Activated T-helper 1 cell treated with anti-CD3 and anti-CD28 coated beads, Interleukin-12 subunit alpha, Interleukin-12 subunit beta, Interleukin-2, Interleukin-4 antibody, amounts not matched to agents 30 ng/mL and 10 ng/mL and 1 ng/mL, durations not matched to agents 14 hours and 24 hours and 36 hours (primary cell): ENCODE measurements at regions of chr3 and their contacts with region 1.

Region 1: GRCh38 chr3:9932843-9933560 is 632 bp upstream of the CRELD1 start:
- DNase-seq: peak; percentile 78
- H3K4me3 Mint-ChIP-seq: peak overlapping the region; percentile 96
- H3K27ac Mint-ChIP-seq: peak overlapping the region; percentile 95
- H3K4me1 Mint-ChIP-seq: peaks cover 34% of the 10 kb centered on the region
- H3K27me3 Mint-ChIP-seq: no peaks in the 10 kb centered on the region

Region 2: GRCh38 chr3:9721015-9721699 is 211.8 kb before region 1 on chr3:
- intact Hi-C with region 1: no loop called
- DNase-seq: no peak
- H3K4me3 Mint-ChIP-seq: no peak overlapping the region
- H3K27ac Mint-ChIP-seq: no peak overlapping the region
- H3K4me1 Mint-ChIP-seq: no peaks in the 10 kb centered on the region
- H3K27me3 Mint-ChIP-seq: peaks cover 7% of the 10 kb centered on the region

Region 3: GRCh38 chr3:9731206-9732079 is 201.6 kb before region 1 on chr3 and contains the start of gene BRPF1:
- intact Hi-C with region 1: loop called (anchors 1 kb)
- DNase-seq: peak; percentile 96
- H3K4me3 Mint-ChIP-seq: peak within 1 kb of the TSS; percentile 96
- H3K27ac Mint-ChIP-seq: peak within 1 kb of the TSS; percentile 94
- H3K4me1 Mint-ChIP-seq: peaks cover 58% of the 10 kb centered on the region
- H3K27me3 Mint-ChIP-seq: no peaks in the 10 kb centered on the region
- total RNA-seq, gene BRPF1: 44.6 and 45.9 TPM in 2 replicates

Region 4: DNA sequence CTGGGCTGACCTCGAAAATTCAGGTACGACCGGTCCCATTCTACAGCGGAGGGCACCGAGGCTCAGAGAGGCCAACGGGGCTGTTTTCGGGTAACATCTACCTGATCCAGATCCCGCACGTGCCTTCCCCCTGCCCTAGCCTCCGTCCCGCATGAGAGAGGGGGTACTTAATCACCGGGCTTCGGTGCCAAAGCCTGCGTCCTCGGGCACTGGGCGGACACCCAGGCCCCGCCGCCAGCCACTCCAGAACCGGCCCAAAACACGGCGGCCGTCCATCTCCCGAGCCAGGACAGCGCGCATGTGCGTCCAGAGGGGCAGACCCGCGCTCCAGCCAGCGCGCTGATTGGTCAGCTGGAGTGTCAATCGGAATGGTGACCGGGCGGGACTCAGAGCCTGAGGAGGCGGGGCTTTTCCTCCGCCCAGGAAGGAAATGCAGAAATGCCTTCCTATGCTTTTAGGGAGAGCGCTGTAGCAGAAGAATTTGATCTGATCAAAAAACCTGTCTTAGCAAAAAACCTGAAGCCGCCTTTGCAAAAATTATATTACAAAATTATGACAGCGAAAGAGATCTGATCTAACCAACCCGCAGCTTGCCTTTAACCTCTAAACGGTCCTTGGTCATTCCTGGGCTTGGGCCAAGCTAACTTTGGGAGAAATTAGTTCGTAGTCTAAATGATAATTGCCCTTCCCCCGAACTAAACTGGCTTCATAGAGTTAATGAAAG is 89.1 kb before region 1 on chr3 and contains the start of gene RPUSD3:
- intact Hi-C with region 1: loop called (anchors 1 kb)
- DNase-seq: peak; percentile 95
- H3K4me3 Mint-ChIP-seq: peak within 1 kb of the TSS; percentile 98
- H3K27ac Mint-ChIP-seq: peak within 1 kb of the TSS; percentile 91
- H3K4me1 Mint-ChIP-seq: peaks cover 28% of the 10 kb centered on the region
- H3K27me3 Mint-ChIP-seq: no peaks in the 10 kb centered on the region
- total RNA-seq, gene RPUSD3: 79.2 and 79.5 TPM in 2 replicates

Region 5: DNA sequence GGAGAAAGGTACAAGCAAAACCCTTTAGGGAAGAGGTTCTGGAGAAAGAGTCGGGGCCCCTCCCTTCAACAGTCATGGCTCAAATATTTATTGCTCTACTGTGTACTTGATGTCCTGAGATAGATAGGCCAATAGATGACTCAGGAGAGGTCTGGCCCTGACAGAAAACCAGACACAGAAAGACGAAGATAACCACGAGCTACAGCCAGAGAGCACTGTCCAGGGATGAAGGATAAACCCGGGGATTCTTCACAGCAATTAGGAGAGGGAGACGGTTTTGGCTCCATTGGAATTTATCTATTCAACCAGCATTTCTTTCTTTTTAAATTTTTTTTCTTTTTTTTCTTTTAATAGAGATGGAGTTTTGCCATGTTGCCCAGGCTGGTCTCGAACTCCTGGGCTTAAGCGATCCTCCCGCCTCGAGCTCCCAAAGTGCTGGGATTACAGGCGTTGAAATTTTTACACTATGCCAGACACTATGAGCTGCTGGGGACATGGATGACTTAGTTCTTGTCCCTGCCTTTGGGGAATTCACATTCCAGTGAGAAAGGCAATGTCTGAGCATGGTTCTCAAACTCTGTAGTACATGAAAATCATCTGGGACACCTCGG is 48.3 kb before region 1 on chr3:
- intact Hi-C with region 1: no loop called
- DNase-seq: no peak
- H3K4me3 Mint-ChIP-seq: no peak overlapping the region
- H3K27ac Mint-ChIP-seq: no peak overlapping the region
- H3K4me1 Mint-ChIP-seq: peaks cover 2% of the 10 kb centered on the region
- H3K27me3 Mint-ChIP-seq: peaks cover 10% of the 10 kb centered on the region

Region 6: DNA sequence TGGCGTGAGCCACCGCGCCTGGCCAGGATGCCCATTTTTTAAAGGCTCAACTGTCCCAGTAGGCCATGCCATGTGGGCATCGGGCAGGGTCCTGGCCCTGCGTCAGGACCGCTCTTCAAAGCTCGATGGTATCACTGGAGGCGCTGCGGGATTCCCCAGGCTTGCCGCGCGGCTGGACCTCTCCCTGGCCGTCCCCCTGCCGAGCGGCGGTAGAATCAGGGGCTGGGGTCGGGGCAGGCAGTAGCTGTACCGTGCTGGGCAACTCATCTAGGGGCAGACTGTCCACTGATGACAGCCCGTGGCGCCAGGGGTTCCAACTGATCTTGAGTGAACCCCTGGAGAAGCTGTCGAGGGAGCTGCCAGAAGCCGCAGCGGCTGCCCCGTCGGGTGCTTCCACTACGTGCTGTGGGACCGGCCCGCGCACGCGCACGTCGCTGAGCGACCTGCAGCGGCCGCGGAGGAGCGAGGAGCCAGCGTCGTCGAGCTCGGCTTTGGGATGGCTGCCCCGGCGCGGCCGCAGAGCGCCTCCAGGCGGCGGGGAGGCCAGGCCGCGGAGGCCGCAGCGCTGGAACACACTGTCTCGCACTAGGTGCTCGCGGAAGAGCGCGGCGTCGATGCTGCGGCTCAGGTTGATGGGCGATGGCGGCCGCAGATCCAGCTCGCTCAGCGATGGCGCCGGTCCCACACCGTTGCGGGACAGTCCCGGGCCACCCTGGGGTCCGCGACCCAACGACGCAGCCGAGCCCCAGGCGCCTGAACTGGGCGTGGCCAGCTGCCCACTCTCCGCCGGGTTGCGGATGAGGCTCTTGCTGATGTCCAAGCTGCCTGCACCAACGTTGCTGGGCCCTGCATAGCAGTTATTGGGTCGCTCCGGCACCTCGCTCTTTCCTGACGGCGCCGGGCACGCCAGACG is 13.4 kb after region 1 on chr3:
- intact Hi-C with region 1: loop called (anchors 1 kb)
- DNase-seq: peak; percentile 86
- H3K4me3 Mint-ChIP-seq: peak overlapping the region; percentile 89
- H3K27ac Mint-ChIP-seq: peak overlapping the region; percentile 82
- H3K4me1 Mint-ChIP-seq: peaks cover 18% of the 10 kb centered on the region
- H3K27me3 Mint-ChIP-seq: no peaks in the 10 kb centered on the region

Region 7: GRCh38 chr3:10010486-10011465 is 77.8 kb after region 1 on chr3:
- intact Hi-C with region 1: loop called (anchors 1 kb)
- DNase-seq: peak; percentile 85
- H3K4me3 Mint-ChIP-seq: peak overlapping the region; percentile 70
- H3K27ac Mint-ChIP-seq: no peak overlapping the region
- H3K4me1 Mint-ChIP-seq: peaks cover 29% of the 10 kb centered on the region
- H3K27me3 Mint-ChIP-seq: peaks cover 4% of the 10 kb centered on the region

Region 8: DNA sequence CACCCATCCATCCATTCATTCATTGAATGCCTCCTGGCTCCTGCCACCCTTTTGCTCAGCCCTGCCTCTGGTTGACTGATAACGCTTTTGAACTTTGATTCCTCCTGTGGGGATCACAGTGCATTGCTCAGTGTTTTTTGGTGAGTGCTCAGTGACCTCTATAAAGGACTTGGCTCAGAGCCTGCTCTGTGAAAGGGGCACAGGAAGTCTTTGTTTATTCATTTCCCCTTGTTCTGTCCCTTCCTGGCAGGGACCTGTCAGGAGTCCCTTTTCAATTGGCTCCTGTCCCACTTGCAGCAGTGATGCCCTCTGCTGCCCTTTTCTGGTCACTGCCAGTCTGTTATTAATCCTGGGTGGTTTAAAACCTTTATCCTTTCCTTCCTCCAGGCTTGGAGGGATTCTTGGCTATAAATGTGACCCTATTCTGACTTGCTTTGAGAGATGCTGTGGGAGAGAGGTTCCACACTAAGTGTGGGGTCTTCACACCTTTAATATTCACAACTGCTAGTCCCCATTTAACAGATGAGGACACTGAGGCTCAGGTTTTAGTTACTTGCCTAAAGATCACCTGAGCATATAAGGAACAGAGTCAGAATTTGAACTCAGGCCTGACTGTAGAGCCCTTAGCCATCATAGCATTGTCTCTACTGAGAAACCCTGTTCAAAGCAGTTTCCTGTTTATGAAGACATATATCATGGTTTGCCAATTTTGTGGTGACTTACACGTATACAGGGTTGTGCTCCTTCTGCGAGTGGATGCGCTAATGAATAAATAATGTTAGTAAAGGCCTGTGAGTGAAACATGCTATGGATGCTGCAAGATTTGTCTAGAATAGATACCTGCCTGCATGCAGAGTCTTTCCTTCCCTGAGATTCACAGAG is 292.0 kb after region 1 on chr3:
- intact Hi-C with region 1: loop called (anchors 10 kb)
- DNase-seq: peak; percentile 45
- H3K4me3 Mint-ChIP-seq: peak overlapping the region; percentile 73
- H3K27ac Mint-ChIP-seq: peak overlapping the region; percentile 97
- H3K4me1 Mint-ChIP-seq: peaks cover 74% of the 10 kb centered on the region
- H3K27me3 Mint-ChIP-seq: peaks cover 3% of the 10 kb centered on the region